Right ventricle myocardium inferior (tissue), 1 donor: ENCODE measurements at regions of chr11 and their contacts with region 1.

Region 1: GRCh38 chr11:121741761-121742361 is 289.1 kb upstream of the SORL1-AS1 start:
- DNase-seq: peak; percentile 84
- ATAC-seq: peak; percentile 97

Region 2: DNA sequence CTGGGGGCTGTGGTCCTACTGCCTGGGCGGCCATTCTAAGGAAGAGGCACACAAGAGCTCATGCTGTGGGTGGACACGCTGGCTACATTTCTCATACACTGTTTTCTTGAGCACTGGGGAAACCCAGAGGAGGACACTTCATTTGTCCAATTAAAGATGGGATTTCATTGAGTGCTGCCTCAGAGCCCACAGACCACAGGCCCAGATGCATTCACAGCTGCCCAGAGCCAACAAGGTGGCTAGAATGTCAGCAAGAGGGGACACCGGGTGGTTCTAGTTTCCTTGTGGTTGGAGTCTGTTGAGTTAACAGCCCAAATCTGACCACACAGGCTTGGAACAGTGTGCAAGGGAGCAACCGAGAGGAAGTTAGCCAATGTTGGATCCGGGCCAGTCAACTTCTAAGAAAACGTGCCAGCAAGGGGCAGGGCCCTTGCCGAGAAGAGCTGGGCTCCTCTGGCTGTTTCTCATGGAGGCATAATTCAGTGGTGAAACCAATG is 324.8 kb before region 1 on chr11:
- intact Hi-C with region 1: no loop called
- DNase-seq: peak; percentile 91
- ATAC-seq: peak; percentile 94

Region 3: GRCh38 chr11:121722431-121723245 is 19.2 kb before region 1 on chr11:
- intact Hi-C with region 1: loop called (anchors 1 kb)
- DNase-seq: peak; percentile 89
- ATAC-seq: peak; percentile 98

Region 4: GRCh38 chr11:121757480-121758125 is 15.7 kb after region 1 on chr11:
- intact Hi-C with region 1: no loop called
- DNase-seq: no peak
- ATAC-seq: no peak

Region 5: DNA sequence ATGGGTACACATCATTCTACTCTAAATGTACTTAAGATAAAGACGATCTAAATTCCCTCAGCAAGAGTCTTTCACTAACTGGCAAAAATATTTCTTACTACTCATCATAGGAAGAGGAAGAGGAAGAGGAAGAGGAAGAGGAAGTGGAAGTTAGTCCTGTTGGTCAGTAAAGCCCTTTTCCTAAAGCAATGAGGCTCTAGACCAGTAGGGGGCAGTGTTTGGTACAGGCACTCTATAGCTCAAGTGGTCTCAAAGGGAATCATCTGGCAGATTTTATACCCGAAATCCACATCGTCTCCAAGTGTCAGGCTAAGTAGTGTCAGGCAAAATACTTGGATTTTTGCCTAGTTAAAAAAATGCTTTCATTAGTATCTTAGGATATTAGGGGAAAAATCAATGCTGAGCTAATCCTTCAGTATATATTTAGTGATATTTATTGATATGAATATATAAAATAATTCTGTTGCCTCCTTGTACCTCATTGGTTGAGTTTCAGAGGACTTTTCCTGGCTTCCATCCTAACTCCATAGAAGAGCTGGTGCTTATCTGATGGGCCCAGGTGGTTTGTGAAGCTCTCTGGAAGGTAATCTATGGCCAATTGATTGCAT is 366.4 kb after region 1 on chr11:
- intact Hi-C with region 1: loop called (anchors 10 kb)
- DNase-seq: no peak
- ATAC-seq: no peak